Motor neuron (in vitro differentiated cells): ENCODE measurements at regions of chr11 and their contacts with region 1.

Region 1: GRCh38 chr11:11022125-11022730 is 164.4 kb upstream of the ZBED5 start:
- ATAC-seq: peak in 3 of 8 experiments; percentile 34 to 55 (median 35)
- H3K4me3 ChIP-seq: no peak overlapping the region
- H3K27ac ChIP-seq: no peak overlapping the region
- H3K4me1 ChIP-seq: peaks cover 6 to 15% of the 10 kb centered on the region in 2 donors

Region 2: DNA sequence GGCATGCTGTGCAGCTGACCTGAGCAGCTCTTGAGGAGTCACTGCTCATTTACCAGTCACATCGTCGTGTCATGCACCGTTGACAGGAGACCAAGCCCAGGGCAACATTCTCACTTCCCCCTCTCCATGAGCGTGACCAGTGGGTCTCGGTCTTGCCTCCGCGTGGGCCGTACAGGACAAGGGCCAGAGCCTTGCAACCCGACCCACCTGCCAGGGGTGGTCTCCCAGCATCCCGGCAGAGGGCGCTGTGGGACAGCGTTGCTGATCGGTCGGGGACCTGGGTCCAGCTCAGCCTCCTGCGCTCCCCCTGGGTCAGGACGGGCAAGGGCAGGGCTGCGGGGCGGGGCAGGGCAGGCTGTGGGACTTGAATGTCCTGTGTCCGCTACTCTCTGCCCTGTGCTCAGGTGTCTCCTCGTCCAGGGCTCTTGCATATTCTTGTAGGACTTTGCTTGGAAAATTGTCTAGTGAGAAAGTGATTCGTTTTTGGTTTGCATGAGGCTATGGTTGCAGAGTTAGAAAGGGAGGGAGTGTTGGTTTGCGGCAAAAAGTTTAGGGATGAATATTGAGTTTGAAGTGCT is 229.7 kb before region 1 on chr11:
- in situ Hi-C with region 1: loop called in 3 of 9 experiments (anchors 10 to 25 kb)
- ATAC-seq: peak; percentile 88 to 94 (median 92)
- H3K4me3 ChIP-seq: no peak overlapping the region
- H3K27ac ChIP-seq: no peak overlapping the region
- H3K4me1 ChIP-seq: no peaks in the 10 kb centered on the region

Region 3: DNA sequence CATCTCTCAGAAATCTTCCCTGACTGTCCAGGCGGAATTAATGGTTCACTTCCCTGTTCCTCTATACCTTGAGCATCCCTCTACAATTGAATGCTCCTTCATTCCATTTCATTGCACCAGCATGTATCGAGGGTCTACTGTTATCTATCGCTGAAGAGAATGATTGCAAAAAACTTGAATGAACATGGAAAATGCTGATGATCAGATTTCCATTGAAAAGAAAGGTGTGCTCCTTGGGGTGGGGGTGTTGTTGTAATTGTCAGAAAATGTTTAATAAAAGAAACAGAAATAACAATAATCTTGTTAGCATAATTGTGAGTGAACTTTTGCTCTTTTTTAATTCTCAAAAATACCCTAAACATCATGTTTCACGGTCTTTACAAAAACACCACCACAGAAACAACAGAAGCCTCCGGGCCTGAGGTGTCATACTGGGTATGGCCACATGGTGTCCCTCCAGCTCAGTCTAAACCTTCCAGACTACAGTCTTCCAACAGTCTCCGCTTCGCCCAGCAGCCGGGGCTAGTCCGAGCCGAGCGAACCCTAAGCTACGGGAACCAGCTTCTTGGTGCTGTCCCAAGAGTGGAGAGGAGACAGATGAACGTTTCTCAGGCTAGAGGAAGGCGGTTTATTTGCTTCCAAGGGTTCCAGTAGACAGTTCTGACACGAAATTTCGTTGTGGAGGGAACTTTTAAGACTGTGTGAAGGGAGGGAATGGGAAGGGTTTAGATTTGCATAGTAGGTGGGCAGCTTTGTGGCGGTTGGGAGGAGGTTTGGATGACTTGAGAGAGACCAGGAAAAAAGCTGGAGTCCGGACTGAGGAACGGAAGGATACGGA is 88.6 kb before region 1 on chr11:
- in situ Hi-C with region 1: loop called in 1 of 9 experiments (anchors 5 kb)
- ATAC-seq: peak; percentile 53 to 83 (median 60)
- H3K4me3 ChIP-seq: peak overlapping the region in 4 of 5 donors; percentile 12 to 40 (median 26)
- H3K27ac ChIP-seq: peak overlapping the region in 1 of 2 donors; percentile 77
- H3K4me1 ChIP-seq: peaks cover 6 to 22% of the 10 kb centered on the region in 2 donors